ENCODE measurements at regions of chr5 and their contacts with region 1.

Region 1: GRCh38 chr5:81768667-81769452 is 18.0 kb upstream of the SSBP2 start:
- DNase-seq: peak; percentile 87
- ATAC-seq: peak; percentile 91
- H3K4me3 ChIP-seq: peak overlapping the region; percentile 23; the same call in 1 of the 2 replicates
- H3K27ac ChIP-seq: peak overlapping the region; percentile 59
- H3K4me1 ChIP-seq: peaks cover 10% of the 10 kb centered on the region
- H3K27me3 ChIP-seq: no peaks in the 10 kb centered on the region
- CTCF ChIP-seq: no peak

Region 2: GRCh38 chr5:81819556-81820317 is 50.9 kb after region 1 on chr5:
- CTCF ChIA-PET with region 1: no interaction called
- POLR2A ChIA-PET with region 1: no interaction called
- intact Hi-C with region 1: loop called (anchors 5 kb)
- DNase-seq: peak; percentile 74
- ATAC-seq: peak; percentile 98
- H3K4me3 ChIP-seq: no peak overlapping the region
- H3K27ac ChIP-seq: peak overlapping the region; percentile 39
- H3K4me1 ChIP-seq: peaks cover 14% of the 10 kb centered on the region
- H3K27me3 ChIP-seq: no peaks in the 10 kb centered on the region
- CTCF ChIP-seq: no peak

Measured in PC-3 (cell line).